CD14-positive monocyte (primary cell): ENCODE measurements at regions of chr10 and their contacts with region 1.

Region 1: GRCh38 chr10:125982260-125982948 is 86.0 kb downstream of the FANK1 start:
- DNase-seq: peak; percentile 46 to 76 (median 63)
- H3K4me3 ChIP-seq: no peak overlapping the region
- H3K4me3 Mint-ChIP-seq: no peak overlapping the region
- H3K27ac ChIP-seq: no peak overlapping the region
- H3K27ac Mint-ChIP-seq: no peak overlapping the region
- H3K4me1 ChIP-seq: peaks cover 0 to 3% of the 10 kb centered on the region in 2 donors
- H3K4me1 Mint-ChIP-seq: peaks cover 3% of the 10 kb centered on the region
- H3K27me3 ChIP-seq: no peaks in the 10 kb centered on the region
- H3K27me3 Mint-ChIP-seq: no peaks in the 10 kb centered on the region
- CTCF ChIP-seq: peak; percentile 80

Region 2: GRCh38 chr10:124647421-124648130 is 1334.8 kb before region 1 on chr10:
- intact Hi-C with region 1: no loop called
- DNase-seq: peak; percentile 92 to 95 (median 94)
- H3K4me3 ChIP-seq: peak overlapping the region in 2 of 3 experiments; percentile 10 to 64
- H3K4me3 Mint-ChIP-seq: peak overlapping the region; percentile 52 to 87
- H3K27ac ChIP-seq: peak overlapping the region; percentile 85 to 92
- H3K27ac Mint-ChIP-seq: peak overlapping the region; percentile 95 to 98 (median 96)
- H3K4me1 ChIP-seq: peaks cover 91 to 100% of the 10 kb centered on the region in 2 donors
- H3K4me1 Mint-ChIP-seq: peaks cover 94% of the 10 kb centered on the region
- H3K27me3 ChIP-seq: no peaks in the 10 kb centered on the region
- H3K27me3 Mint-ChIP-seq: no peaks in the 10 kb centered on the region
- CTCF ChIP-seq: peak; percentile 50

Region 3: GRCh38 chr10:125549653-125550052 is 432.8 kb before region 1 on chr10:
- intact Hi-C with region 1: no loop called
- DNase-seq: no peak
- H3K4me3 ChIP-seq: no peak overlapping the region
- H3K4me3 Mint-ChIP-seq: no peak overlapping the region
- H3K27ac ChIP-seq: no peak overlapping the region
- H3K27ac Mint-ChIP-seq: no peak overlapping the region
- H3K4me1 ChIP-seq: no peaks in the 10 kb centered on the region
- H3K4me1 Mint-ChIP-seq: no peaks in the 10 kb centered on the region
- H3K27me3 ChIP-seq: no peaks in the 10 kb centered on the region
- H3K27me3 Mint-ChIP-seq: peaks cover 0 to 10% (median 0%) of the 10 kb centered on the region in 3 donors
- CTCF ChIP-seq: no peak

Region 4: GRCh38 chr10:126073606-126074005 is 91.2 kb after region 1 on chr10:
- intact Hi-C with region 1: no loop called
- DNase-seq: no peak
- H3K4me3 ChIP-seq: no peak overlapping the region
- H3K4me3 Mint-ChIP-seq: no peak overlapping the region
- H3K27ac ChIP-seq: no peak overlapping the region
- H3K27ac Mint-ChIP-seq: no peak overlapping the region
- H3K4me1 ChIP-seq: no peaks in the 10 kb centered on the region
- H3K4me1 Mint-ChIP-seq: peaks cover 1% of the 10 kb centered on the region
- H3K27me3 ChIP-seq: peaks cover 0 to 3% of the 10 kb centered on the region in 2 donors
- H3K27me3 Mint-ChIP-seq: peaks cover 5 to 11% (median 6%) of the 10 kb centered on the region in 3 donors
- CTCF ChIP-seq: no peak

Region 5: DNA sequence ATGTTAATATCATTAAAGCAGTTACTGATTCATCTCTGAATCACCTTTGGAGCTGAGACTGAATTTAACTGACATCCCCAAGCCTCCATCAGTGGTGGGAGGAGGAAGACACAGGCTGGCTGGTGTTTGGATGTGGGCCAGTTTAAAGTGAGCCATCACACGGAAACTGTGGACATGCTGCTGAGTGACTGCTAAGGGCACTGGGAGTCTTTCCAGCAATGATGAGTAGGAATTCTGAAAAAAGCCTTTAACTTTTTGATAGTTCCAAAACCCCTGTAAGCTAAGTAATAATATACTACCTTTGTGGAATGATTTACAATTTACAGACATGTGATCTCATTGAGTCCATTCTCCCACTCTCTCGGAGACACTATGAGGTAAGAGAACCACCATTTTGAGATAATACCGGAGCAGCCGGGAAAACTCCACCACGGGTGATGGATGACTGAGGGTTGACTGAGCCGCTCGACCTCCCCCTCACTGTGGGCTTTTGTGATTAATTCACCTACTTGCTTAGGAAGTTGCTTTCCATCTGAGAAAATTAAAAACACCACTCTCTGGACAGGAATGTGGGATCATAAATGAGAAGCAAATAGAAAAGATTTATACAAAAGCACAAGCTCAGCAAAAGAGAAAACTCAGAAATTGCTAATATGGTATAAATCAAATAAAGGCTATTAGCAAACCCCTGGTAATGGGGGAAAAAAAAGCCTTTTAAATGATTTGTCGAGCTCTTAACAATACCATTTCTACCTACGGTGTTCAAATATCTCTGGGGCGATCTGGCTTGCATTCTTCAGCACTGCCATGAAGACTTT is 108.7 kb after region 1 on chr10:
- intact Hi-C with region 1: loop called in 1 of 2 experiments (anchors 10 kb)
- DNase-seq: peak in 1 of 3 donors; percentile 27
- H3K4me3 ChIP-seq: no peak overlapping the region
- H3K4me3 Mint-ChIP-seq: no peak overlapping the region
- H3K27ac ChIP-seq: no peak overlapping the region
- H3K27ac Mint-ChIP-seq: no peak overlapping the region
- H3K4me1 ChIP-seq: peaks cover 31 to 35% of the 10 kb centered on the region in 2 donors
- H3K4me1 Mint-ChIP-seq: peaks cover 31% of the 10 kb centered on the region
- H3K27me3 ChIP-seq: no peaks in the 10 kb centered on the region
- H3K27me3 Mint-ChIP-seq: peaks cover 0 to 1% (median 0%) of the 10 kb centered on the region in 3 donors
- CTCF ChIP-seq: no peak

Region 6: DNA sequence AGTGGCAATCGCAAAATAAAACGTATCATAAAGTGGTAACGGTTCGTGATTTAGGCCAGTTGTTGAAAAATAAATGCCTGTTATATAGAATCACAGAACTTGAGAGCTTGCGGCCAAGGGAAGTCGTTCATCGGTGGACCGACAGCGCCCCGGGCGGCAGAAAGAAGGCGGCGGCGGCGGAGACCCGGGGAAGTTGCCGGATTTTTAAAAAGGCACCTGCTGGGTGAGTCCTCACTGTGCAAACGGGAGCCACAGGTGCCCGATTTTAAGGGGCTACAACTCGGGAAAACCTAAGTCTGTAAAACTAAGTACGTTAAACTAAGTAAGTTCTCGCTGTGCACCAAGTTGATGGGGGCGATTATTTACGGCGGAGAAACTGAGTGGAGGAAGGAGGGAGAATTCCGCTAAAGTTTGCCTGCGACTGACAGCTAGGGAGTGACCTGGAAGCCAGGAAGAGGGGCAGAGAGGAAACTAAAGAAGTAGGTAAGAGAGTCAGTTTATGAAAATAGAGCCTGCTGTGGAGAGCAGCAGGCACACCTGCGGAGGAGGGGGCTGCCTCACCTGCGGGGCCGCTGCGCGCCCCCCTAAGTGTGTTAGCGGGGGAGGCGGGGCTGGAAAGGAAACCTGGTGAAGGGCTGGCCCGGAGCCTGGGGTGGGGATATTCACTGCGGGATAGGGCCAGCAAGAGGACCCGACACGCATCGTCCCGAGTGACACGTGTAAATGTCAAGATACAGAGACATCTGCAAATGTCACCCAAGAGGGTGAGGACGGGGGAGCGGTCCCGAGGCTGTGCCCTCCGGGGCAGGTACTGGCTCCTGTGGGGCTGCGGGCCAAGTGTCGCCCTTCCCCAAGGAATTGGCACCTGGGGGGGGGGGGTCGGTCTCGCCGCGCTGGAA is 404.9 kb after region 1 on chr10:
- intact Hi-C with region 1: loop called in 1 of 2 experiments (anchors 5 kb)
- DNase-seq: no peak
- H3K4me3 ChIP-seq: no peak overlapping the region
- H3K4me3 Mint-ChIP-seq: peak overlapping the region in 1 of 2 donors; percentile 84
- H3K27ac ChIP-seq: no peak overlapping the region
- H3K27ac Mint-ChIP-seq: no peak overlapping the region
- H3K4me1 ChIP-seq: no peaks in the 10 kb centered on the region
- H3K4me1 Mint-ChIP-seq: peaks cover 6% of the 10 kb centered on the region
- H3K27me3 ChIP-seq: peaks cover 28 to 51% of the 10 kb centered on the region in 2 donors
- H3K27me3 Mint-ChIP-seq: peaks cover 38 to 50% (median 48%) of the 10 kb centered on the region in 3 donors
- CTCF ChIP-seq: peak; percentile 18

Region 7: DNA sequence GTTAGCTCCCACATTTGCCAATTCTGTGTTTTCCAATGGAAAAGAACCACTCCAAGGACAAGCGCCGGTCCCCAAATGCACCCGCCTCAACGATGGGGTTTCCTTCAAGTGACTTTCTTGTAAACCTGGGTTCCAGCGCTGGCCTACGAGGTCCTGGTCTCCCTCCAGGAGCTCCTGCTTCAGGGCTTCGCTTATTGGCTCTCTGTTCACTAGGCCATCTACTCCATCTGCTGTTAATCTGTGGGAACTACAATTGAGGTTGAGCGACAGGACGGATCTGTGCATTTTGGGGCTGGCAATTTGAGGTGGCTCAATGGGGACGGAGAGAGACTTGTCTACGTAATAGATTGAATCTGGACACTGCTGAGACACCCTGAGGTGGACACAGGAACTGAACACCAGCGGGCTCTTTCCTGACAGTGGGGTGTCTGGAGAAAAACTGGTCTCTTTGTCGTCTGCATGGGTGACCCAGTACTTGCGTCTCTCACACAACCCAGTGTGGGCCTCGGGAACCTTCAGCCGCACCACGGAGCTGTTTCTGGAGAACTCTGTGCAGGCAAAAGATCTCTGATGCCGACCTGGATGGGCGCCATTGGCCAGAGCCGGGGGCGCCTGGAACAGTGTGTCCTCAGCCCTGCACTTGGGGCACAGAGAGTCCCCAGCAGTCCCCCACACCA is 521.8 kb after region 1 on chr10:
- intact Hi-C with region 1: loop called (anchors 5 kb)
- DNase-seq: peak in 1 of 3 donors; percentile 9
- H3K4me3 ChIP-seq: no peak overlapping the region
- H3K4me3 Mint-ChIP-seq: no peak overlapping the region
- H3K27ac ChIP-seq: no peak overlapping the region
- H3K27ac Mint-ChIP-seq: no peak overlapping the region
- H3K4me1 ChIP-seq: no peaks in the 10 kb centered on the region
- H3K4me1 Mint-ChIP-seq: no peaks in the 10 kb centered on the region
- H3K27me3 ChIP-seq: no peaks in the 10 kb centered on the region
- H3K27me3 Mint-ChIP-seq: peaks cover 0 to 8% (median 3%) of the 10 kb centered on the region in 3 donors
- CTCF ChIP-seq: peak; percentile 53

Region 8: DNA sequence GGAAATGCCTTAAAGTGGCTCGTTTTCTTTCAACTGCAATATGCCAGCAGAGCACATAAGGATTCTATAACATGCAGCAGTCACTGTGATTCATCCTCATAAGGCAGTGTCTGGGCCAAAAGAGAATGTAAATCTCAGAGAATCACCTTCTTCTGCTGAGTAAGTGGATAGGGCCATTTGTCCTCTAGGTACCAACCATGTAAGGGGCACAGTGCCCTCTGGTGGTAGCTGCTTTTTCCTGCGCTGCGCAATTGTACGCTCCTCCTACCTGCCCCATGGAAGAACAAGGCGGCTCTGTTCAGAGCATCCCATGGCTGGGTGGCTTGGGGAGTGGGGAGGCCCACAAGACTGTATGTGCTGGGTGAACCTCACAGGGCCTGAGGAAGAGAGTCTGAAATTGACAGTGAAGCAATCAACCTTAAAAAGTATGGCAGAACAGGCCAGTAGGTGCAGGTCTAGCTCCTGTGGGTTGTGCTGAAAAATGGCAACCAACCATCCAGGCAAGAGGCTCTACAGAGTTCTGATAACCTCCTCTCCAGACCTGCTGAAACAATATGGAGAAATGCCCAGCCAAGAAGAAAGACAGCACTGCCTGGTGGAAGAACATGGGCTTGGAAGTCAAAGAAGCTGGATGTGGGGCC is 766.7 kb after region 1 on chr10:
- intact Hi-C with region 1: loop called (anchors 5 kb)
- DNase-seq: peak; percentile 6 to 22 (median 16)
- H3K4me3 ChIP-seq: no peak overlapping the region
- H3K4me3 Mint-ChIP-seq: peak overlapping the region in 1 of 2 donors; percentile 40
- H3K27ac ChIP-seq: no peak overlapping the region
- H3K27ac Mint-ChIP-seq: no peak overlapping the region
- H3K4me1 ChIP-seq: no peaks in the 10 kb centered on the region
- H3K4me1 Mint-ChIP-seq: no peaks in the 10 kb centered on the region
- H3K27me3 ChIP-seq: no peaks in the 10 kb centered on the region
- H3K27me3 Mint-ChIP-seq: peaks cover 0 to 4% (median 2%) of the 10 kb centered on the region in 3 donors
- CTCF ChIP-seq: peak; percentile 56

Region 9: DNA sequence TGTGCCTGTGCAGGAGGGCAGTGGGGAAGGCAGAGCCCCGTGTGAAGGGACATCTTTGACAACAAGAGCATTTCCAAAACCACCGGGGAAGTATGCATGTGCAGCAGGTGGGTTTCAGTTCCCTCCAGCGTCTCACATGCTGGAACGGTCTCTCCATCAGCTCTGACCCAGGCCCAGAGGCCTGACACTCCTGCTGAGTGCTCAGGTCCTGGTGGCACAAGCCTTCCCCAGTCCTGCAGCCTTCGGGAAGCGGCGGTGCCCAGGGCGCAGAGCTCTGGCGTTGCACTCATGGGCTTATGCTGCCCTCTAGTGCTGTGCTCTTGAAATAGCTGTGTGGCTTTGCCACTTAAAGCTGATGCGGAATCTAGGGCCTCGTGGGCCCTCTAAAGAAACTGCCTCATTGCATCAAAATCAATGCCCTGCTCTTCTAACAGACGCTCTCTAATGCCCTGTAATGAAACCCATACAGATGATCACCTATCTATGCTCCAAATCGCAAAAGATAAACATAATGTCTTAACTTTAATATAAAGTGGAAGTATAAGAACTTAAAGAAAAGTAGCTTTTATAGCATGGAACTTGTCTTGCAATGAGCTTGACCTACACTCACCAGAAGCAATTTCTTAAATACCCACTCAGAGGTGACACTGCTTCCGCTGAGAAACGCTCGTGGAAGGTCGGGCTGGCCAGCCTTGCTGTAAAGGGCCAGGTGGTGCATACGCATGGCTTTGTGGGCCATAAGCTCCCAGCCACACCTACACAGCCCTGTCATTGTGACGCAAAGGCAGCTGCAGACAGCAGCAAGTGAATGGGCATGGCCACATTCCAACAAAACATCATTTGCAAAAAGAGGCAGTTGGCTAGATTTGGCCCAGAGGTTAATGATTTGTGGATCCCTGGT is 1871.7 kb after region 1 on chr10:
- intact Hi-C with region 1: loop called (anchors 10 kb)
- DNase-seq: peak; percentile 48 to 77 (median 65)
- H3K4me3 ChIP-seq: no peak overlapping the region
- H3K4me3 Mint-ChIP-seq: peak overlapping the region in 1 of 2 donors; percentile 84
- H3K27ac ChIP-seq: no peak overlapping the region
- H3K27ac Mint-ChIP-seq: no peak overlapping the region
- H3K4me1 ChIP-seq: peaks cover 16 to 21% of the 10 kb centered on the region in 2 donors
- H3K4me1 Mint-ChIP-seq: peaks cover 20% of the 10 kb centered on the region
- H3K27me3 ChIP-seq: peaks cover 0 to 5% of the 10 kb centered on the region in 2 donors
- H3K27me3 Mint-ChIP-seq: peaks cover 5 to 11% (median 10%) of the 10 kb centered on the region in 3 donors
- CTCF ChIP-seq: peak; percentile 89